ENCODE measurements at regions of chr3 and their contacts with region 1.

Region 1: GRCh38 chr3:71130471-71131374 is 452.8 kb downstream of the FOXP1 start:
- DNase-seq: peak in 1 of 2 donors; percentile 47
- ATAC-seq: peak; percentile 49 to 78 (median 53)
- H3K4me3 ChIP-seq: peak overlapping the region; percentile 63
- H3K27ac ChIP-seq: peak overlapping the region; percentile 58
- H3K4me1 ChIP-seq: peaks cover 52% of the 10 kb centered on the region
- H3K27me3 ChIP-seq: no peaks in the 10 kb centered on the region
- CTCF ChIP-seq: no peak

Region 2: GRCh38 chr3:71045917-71046282 is 84.8 kb before region 1 on chr3:
- intact Hi-C with region 1: no loop called
- DNase-seq: no peak
- ATAC-seq: no peak
- H3K4me3 ChIP-seq: no peak overlapping the region
- H3K27ac ChIP-seq: no peak overlapping the region
- H3K4me1 ChIP-seq: peaks cover 5% of the 10 kb centered on the region
- H3K27me3 ChIP-seq: no peaks in the 10 kb centered on the region
- CTCF ChIP-seq: no peak

Region 3: DNA sequence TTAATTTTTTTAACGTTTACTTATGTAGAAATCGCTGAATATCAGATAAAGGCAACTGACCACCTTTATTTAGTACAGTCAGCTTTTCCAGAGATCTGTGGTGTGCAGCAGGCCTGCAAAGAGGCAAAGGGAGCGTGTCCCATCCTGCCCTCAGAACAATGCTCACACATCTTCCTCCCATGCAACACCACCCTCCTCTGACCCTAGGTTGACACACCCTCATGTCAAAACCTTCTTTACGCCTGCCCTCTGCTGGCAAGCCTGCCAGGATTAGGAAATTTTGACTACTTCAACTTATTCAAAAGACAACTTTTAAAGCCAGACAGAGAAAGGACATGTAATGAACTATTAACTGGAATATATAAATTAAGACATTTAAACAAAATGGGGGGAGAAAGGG is 60.9 kb before region 1 on chr3:
- intact Hi-C with region 1: loop called in 1 of 2 experiments (anchors 5 kb)
- DNase-seq: peak; percentile 46 to 74
- ATAC-seq: peak in 1 of 4 donors; percentile 16
- H3K4me3 ChIP-seq: no peak overlapping the region
- H3K27ac ChIP-seq: no peak overlapping the region
- H3K4me1 ChIP-seq: peaks cover 25% of the 10 kb centered on the region
- H3K27me3 ChIP-seq: no peaks in the 10 kb centered on the region
- CTCF ChIP-seq: peak; percentile 33

Region 4: GRCh38 chr3:71219744-71220638 is 89.3 kb after region 1 on chr3:
- intact Hi-C with region 1: no loop called
- DNase-seq: no peak
- ATAC-seq: no peak
- H3K4me3 ChIP-seq: no peak overlapping the region
- H3K27ac ChIP-seq: no peak overlapping the region
- H3K4me1 ChIP-seq: no peaks in the 10 kb centered on the region
- H3K27me3 ChIP-seq: no peaks in the 10 kb centered on the region
- CTCF ChIP-seq: no peak

Measured in psoas muscle (tissue), 8 donors.